ENCODE measurements at regions of chr13 and their contacts with region 1.

Region 1: DNA sequence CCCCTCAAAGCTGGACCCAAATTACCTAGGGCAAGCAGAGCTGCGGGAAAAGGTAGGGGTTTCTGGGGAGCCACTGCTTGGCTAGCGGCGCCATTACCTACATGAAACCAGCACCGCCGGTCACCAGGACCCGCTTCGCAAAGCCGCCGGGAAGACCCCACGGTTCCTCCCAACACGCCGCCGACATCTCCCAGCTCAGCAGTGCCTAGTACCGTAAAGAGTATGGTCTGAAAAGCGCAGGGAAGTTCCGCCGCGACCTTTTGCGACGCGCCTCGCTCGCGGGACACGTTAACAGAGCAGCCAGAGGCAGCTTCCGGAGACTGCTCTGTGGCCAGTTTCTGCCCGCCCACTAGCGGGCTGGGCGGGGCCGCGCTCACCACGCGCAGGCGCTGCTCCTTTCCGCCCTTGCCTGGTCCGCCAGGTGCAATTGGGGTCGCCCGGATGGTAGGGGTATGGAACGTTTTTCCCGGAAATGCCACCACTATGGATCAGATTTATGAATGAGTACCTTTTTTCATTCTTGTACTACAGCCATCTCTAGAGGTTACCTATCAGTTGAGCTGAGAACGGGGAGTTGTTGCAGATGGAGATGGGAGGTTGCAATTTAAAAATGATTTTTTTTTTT is at the start of gene TGDS:
- DNase-seq: peak; percentile 92
- H3K4me3 Mint-ChIP-seq: peak within 1 kb of the TSS; percentile 89
- H3K27ac Mint-ChIP-seq: peak within 1 kb of the TSS; percentile 92
- H3K4me1 Mint-ChIP-seq: peaks cover 21% of the 10 kb centered on the region
- H3K27me3 Mint-ChIP-seq: no peaks in the 10 kb centered on the region
- CTCF ChIP-seq: no peak
- total RNA-seq, gene TGDS: 14.1 and 16.8 TPM in 2 replicates

Region 2: GRCh38 chr13:94549232-94550061 is 46.6 kb before region 1 on chr13:
- CTCF ChIA-PET with region 1: no interaction called
- POLR2A ChIA-PET with region 1: interaction called, 15 read pairs
- intact Hi-C with region 1: loop called (anchors 2 kb)
- DNase-seq: peak; percentile 86
- H3K4me3 Mint-ChIP-seq: peak overlapping the region; percentile 74
- H3K27ac Mint-ChIP-seq: peak overlapping the region; percentile 86
- H3K4me1 Mint-ChIP-seq: peaks cover 7% of the 10 kb centered on the region
- H3K27me3 Mint-ChIP-seq: no peaks in the 10 kb centered on the region
- CTCF ChIP-seq: no peak

Region 3: GRCh38 chr13:94579063-94579462 is 17.0 kb before region 1 on chr13:
- CTCF ChIA-PET with region 1: no interaction called
- POLR2A ChIA-PET with region 1: interaction called, 10 read pairs
- intact Hi-C with region 1: no loop called
- DNase-seq: no peak
- H3K4me3 Mint-ChIP-seq: no peak overlapping the region
- H3K27ac Mint-ChIP-seq: no peak overlapping the region
- H3K4me1 Mint-ChIP-seq: no peaks in the 10 kb centered on the region
- H3K27me3 Mint-ChIP-seq: no peaks in the 10 kb centered on the region
- CTCF ChIP-seq: no peak

Region 4: GRCh38 chr13:94585543-94586101 is 10.4 kb before region 1 on chr13:
- CTCF ChIA-PET with region 1: no interaction called
- POLR2A ChIA-PET with region 1: interaction called, 11 read pairs
- intact Hi-C with region 1: no loop called
- DNase-seq: no peak
- H3K4me3 Mint-ChIP-seq: no peak overlapping the region
- H3K27ac Mint-ChIP-seq: no peak overlapping the region
- H3K4me1 Mint-ChIP-seq: peaks cover 8% of the 10 kb centered on the region
- H3K27me3 Mint-ChIP-seq: no peaks in the 10 kb centered on the region
- CTCF ChIP-seq: no peak

Measured in MCF 10A (cell line).